ENCODE measurements at regions of chr7 and their contacts with region 1.

Region 1: DNA sequence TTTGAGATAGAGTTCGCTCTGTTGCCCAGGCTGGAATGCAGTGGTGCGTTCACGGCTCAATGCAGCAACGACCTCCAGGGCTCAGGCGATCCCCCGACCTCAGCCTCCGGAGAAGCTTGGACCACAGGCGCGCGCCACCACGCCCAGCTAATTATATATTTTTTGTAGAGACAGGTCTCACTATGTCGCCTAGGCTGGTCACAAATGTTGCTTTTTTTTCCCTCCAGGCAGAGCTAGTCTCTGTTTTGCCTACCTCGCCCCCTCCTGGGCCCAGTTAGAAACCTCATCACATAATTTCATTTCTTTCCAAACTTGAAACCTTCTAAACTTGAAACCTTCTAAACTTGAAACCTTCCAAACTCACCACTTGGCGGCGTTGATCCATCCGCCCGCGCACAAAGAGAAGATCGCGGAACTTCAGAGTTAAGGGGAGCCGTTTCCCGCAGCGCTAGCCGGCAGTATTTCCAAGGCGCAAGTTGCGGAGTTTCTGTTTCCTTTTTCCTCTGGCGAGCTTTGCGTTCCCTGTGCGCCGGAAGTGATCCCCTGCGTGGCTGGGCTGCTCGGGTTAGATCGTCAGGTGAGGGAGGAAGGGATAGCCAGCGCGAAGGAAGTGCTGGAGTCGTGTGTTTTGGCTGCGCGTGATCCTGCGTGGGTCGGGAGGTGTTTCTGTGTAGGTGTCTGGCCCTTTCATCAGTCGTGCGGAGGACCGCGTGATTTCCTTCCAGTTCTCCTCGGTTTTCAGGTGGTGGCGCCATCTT is at the start of gene SSBP1:
- DNase-seq: peak; percentile 79
- ATAC-seq: peak; percentile 89
- H3K4me3 Mint-ChIP-seq: peak within 1 kb of the TSS; percentile 99
- H3K27ac Mint-ChIP-seq: peak within 1 kb of the TSS; percentile 98
- H3K4me1 Mint-ChIP-seq: peaks cover 40% of the 10 kb centered on the region
- H3K27me3 Mint-ChIP-seq: no peaks in the 10 kb centered on the region
- CTCF ChIP-seq: peak; percentile 80
- total RNA-seq, gene SSBP1: 122 and 146 TPM in 2 replicates

Region 2: GRCh38 chr7:140696680-140697446 is 1041.2 kb before region 1 on chr7 and contains the start of gene NDUFB2:
- CTCF ChIA-PET with region 1: no interaction called
- POLR2A ChIA-PET with region 1: no interaction called
- intact Hi-C with region 1: loop called (anchors 1 kb)
- DNase-seq: peak; percentile 90
- ATAC-seq: peak; percentile 86
- H3K4me3 Mint-ChIP-seq: peak within 1 kb of the TSS; percentile 94
- H3K27ac Mint-ChIP-seq: peak within 1 kb of the TSS; percentile 98
- H3K4me1 Mint-ChIP-seq: peaks cover 34% of the 10 kb centered on the region
- H3K27me3 Mint-ChIP-seq: no peaks in the 10 kb centered on the region
- CTCF ChIP-seq: no peak
- total RNA-seq, gene NDUFB2: 140 and 168 TPM in 2 replicates

Region 3: DNA sequence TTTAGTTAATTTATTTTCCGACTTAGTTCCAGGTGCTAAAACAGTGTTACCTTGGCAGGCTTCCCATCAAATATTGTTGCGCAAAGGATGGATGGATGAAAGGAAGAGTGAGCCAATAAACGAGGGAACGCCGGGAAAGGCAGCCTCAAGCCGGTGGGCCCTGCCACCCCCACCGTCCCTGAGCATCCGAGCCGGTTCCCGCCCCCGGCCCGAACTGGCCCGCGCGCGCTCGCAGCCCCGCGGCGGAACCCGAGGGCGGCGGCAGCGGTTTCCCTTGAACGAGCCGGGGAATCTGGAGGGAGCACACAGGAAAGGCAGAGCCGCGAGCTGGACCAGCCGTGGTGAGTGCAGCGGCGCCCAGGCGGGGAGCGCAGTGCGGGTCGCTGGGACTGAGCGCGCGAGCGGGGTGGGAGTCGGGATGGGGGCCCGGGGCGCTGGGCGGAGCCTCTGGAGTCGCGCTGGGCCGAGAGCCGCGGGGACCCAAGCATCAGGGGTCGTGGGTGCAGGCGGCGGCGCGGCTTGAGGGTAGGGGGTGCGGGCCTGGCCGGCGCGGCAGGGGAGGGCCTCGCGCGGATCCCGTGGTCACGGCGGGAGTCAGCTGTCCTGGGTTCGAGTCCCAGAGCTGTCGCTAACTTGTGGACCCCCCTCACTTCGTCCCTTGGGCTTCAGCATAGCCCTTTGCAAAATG is 186.8 kb before region 1 on chr7 and contains the start of gene AGK:
- CTCF ChIA-PET with region 1: no interaction called
- POLR2A ChIA-PET with region 1: interaction called, 11 read pairs
- intact Hi-C with region 1: loop called (anchors 1 kb)
- DNase-seq: peak; percentile 69
- ATAC-seq: peak; percentile 94
- H3K4me3 Mint-ChIP-seq: peak within 1 kb of the TSS; percentile 90
- H3K27ac Mint-ChIP-seq: peak within 1 kb of the TSS; percentile 54
- H3K4me1 Mint-ChIP-seq: peaks cover 29% of the 10 kb centered on the region
- H3K27me3 Mint-ChIP-seq: no peaks in the 10 kb centered on the region
- CTCF ChIP-seq: no peak
- total RNA-seq, gene AGK: 35.1 and 39.3 TPM in 2 replicates

Region 4: DNA sequence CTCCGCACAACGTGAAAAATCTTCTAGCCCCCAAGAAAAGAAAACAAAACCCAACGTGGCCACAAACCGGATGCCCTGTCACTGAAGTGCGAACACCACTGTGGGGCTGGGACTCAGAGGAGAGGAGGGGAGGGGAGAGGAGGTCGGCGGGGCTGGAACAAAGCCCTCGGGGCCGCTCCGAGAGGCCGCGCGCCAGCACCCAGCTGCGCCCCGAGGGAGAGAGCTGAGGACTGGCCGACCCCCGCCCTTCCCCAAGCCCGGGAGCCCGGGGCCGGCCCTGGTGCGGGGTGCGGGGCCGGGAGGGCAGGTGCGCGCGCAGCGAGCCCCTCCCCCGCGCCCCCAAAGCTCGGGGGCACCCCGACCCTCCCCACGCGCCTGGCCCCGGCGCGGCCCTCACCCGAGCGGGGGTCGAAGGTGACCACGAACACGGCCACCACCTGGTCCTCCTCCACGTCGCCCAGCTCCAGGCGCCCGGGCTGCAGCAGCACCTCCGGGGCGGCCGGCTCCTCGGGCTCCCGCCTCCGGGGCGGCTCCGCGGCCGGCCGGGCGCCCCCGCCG is 36.4 kb before region 1 on chr7:
- CTCF ChIA-PET with region 1: interaction called, 17 read pairs
- POLR2A ChIA-PET with region 1: interaction called, 56 read pairs
- intact Hi-C with region 1: loop called (anchors 1 kb)
- DNase-seq: peak; percentile 69
- ATAC-seq: peak; percentile 89
- H3K4me3 Mint-ChIP-seq: peak overlapping the region; percentile 85
- H3K27ac Mint-ChIP-seq: peak overlapping the region; percentile 75
- H3K4me1 Mint-ChIP-seq: peaks cover 50% of the 10 kb centered on the region
- H3K27me3 Mint-ChIP-seq: no peaks in the 10 kb centered on the region
- CTCF ChIP-seq: no peak

Region 5: GRCh38 chr7:141960687-141961422 is 222.8 kb after region 1 on chr7:
- CTCF ChIA-PET with region 1: no interaction called
- POLR2A ChIA-PET with region 1: no interaction called
- intact Hi-C with region 1: loop called (anchors 1 kb)
- DNase-seq: no peak
- ATAC-seq: peak; percentile 75
- H3K4me3 Mint-ChIP-seq: peak overlapping the region; percentile 13
- H3K27ac Mint-ChIP-seq: peak overlapping the region; percentile 85
- H3K4me1 Mint-ChIP-seq: peaks cover 20% of the 10 kb centered on the region
- H3K27me3 Mint-ChIP-seq: no peaks in the 10 kb centered on the region
- CTCF ChIP-seq: no peak

Measured in activated B cell treated with CpG ODN at 0.5 μM for 24 hours (primary cell).